ENCODE measurements at regions of chrX and their contacts with region 1.

Region 1: GRCh38 chrX:155544881-155545280 is 67.9 kb downstream of the TMLHE start:
- DNase-seq: no peak
- H3K4me3 ChIP-seq: no peak overlapping the region
- H3K4me3 Mint-ChIP-seq: no peak overlapping the region
- H3K27ac ChIP-seq: no peak overlapping the region
- H3K27ac Mint-ChIP-seq: no peak overlapping the region
- H3K4me1 ChIP-seq: no peaks in the 10 kb centered on the region
- H3K4me1 Mint-ChIP-seq: no peaks in the 10 kb centered on the region
- H3K27me3 ChIP-seq: no peaks in the 10 kb centered on the region
- H3K27me3 Mint-ChIP-seq: peaks cover 0 to 2% (median 0%) of the 10 kb centered on the region in 3 donors
- CTCF ChIP-seq: no peak

Region 2: DNA sequence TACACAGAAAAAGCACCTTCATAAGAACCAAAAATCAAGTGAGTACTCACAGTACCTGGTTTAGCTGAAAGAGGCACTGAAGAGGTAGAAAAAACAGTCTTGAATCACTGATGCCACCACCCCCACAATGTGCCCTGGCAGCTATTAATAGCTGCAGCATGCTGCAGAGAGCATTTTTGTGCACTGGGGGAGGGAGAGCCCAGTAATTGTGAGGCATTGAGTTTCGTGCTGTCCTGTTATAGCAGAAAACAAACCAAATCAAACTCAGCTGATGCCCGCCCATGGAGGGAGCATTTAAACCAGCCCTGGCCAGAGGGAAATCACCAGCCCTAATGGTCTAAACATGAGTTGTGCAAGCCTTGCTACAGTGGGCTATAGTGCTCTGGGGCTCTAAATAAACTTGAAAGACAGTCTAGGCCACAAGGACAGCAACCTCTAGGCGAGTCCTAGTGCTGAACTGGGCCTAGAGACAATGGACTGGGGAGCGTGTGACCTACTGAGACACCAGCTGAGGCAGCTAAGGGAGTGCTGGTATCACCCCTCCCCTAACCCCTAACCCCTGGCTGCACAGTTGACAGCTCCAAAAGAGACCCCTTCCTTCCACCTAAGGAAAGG is 174.2 kb after region 1 on chrX:
- intact Hi-C with region 1: loop called in 1 of 2 experiments (anchors 10 kb)
- DNase-seq: no peak
- H3K4me3 ChIP-seq: no peak overlapping the region
- H3K4me3 Mint-ChIP-seq: no peak overlapping the region
- H3K27ac ChIP-seq: no peak overlapping the region
- H3K27ac Mint-ChIP-seq: no peak overlapping the region
- H3K4me1 ChIP-seq: no peaks in the 10 kb centered on the region
- H3K4me1 Mint-ChIP-seq: no peaks in the 10 kb centered on the region
- H3K27me3 ChIP-seq: no peaks in the 10 kb centered on the region
- H3K27me3 Mint-ChIP-seq: peaks cover 0 to 3% (median 2%) of the 10 kb centered on the region in 3 donors
- CTCF ChIP-seq: no peak

Measured in CD14-positive monocyte (primary cell).